ENCODE measurements at regions of chr1 and their contacts with region 1.

Region 1: DNA sequence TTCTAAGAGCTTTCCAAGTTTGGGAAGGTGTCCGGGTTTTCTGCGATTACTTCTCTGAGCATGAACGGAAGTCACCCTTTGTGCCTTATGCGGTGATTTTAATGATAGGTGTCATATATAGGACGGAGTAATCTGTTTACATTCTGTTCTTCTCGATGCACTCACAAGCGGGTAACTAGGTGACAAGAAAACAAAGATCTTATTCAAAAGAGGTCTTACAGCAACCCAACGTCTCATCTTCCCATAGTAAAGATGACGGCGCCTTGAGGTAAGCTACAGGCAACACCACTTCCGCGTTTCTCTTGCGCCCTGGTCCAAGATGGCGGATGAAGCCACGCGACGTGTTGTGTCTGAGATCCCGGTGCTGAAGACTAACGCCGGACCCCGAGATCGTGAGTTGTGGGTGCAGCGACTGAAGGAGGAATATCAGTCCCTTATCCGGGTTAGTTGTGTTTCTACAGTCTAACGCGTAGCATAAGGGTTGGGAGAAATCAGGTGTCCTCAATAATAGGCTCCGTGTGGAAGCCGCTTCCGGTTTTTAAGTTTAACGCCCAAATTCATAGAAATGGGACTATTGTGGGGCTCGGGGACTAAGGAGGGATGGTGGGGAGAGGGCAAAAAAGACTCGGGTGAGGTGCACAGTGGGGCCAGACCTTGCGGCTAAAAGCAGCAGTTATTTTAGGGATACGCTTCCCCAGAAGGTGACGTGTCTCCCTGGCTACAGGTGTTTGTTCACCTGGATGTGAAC is at the start of gene UFC1:
- DNase-seq: peak; percentile 72 to 89
- ATAC-seq: peak; percentile 88 to 98 (median 90)
- H3K4me3 ChIP-seq: peak within 1 kb of the TSS; percentile 83
- H3K27ac ChIP-seq: peak within 1 kb of the TSS; percentile 96
- H3K4me1 ChIP-seq: peaks cover 3% of the 10 kb centered on the region
- H3K27me3 ChIP-seq: no peaks in the 10 kb centered on the region
- CTCF ChIP-seq: no peak
- total RNA-seq, gene UFC1: 56.6 to 76.2 (median 63.9) TPM

Region 2: GRCh38 chr1:161045750-161046571 is 107.9 kb before region 1 on chr1 and contains the start of gene USF1:
- intact Hi-C with region 1: loop called in 1 of 2 experiments (anchors 5 kb)
- DNase-seq: peak; percentile 92 to 96
- ATAC-seq: peak; percentile 98 to 99 (median 98)
- H3K4me3 ChIP-seq: peak within 1 kb of the TSS; percentile 88
- H3K27ac ChIP-seq: peak within 1 kb of the TSS; percentile 91
- H3K4me1 ChIP-seq: peaks cover 16% of the 10 kb centered on the region
- H3K27me3 ChIP-seq: peaks cover 0 to 2% (median 0%) of the 10 kb centered on the region in 3 donors
- CTCF ChIP-seq: no peak
- total RNA-seq, gene USF1: 29.8 to 50.6 (median 37.3) TPM

Region 3: DNA sequence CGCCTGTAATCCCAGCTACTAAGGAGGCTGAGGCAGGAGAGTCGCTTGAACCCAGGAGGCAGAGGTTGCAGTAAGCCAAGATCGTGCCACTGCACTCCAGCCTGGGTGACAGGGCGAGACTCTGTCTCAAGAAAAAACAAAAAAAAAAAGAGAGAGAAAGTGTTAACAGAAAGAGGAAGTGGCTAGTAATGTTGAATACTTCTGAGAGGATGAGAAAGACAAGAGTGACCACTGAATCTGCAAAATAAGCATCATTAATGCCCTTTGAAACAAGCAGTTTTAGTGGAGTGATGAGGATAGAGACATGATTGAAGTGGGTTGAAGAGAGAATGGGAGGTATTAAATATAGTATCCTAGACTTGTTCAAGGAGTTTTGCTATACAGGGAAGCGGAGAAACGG is 144.3 kb after region 1 on chr1:
- intact Hi-C with region 1: no loop called
- DNase-seq: no peak
- ATAC-seq: no peak
- H3K4me3 ChIP-seq: no peak overlapping the region
- H3K27ac ChIP-seq: no peak overlapping the region
- H3K4me1 ChIP-seq: no peaks in the 10 kb centered on the region
- H3K27me3 ChIP-seq: no peaks in the 10 kb centered on the region
- CTCF ChIP-seq: no peak